AG04450 (cell line): ENCODE measurements at regions of chr21 and their contacts with region 1.

Region 1: DNA sequence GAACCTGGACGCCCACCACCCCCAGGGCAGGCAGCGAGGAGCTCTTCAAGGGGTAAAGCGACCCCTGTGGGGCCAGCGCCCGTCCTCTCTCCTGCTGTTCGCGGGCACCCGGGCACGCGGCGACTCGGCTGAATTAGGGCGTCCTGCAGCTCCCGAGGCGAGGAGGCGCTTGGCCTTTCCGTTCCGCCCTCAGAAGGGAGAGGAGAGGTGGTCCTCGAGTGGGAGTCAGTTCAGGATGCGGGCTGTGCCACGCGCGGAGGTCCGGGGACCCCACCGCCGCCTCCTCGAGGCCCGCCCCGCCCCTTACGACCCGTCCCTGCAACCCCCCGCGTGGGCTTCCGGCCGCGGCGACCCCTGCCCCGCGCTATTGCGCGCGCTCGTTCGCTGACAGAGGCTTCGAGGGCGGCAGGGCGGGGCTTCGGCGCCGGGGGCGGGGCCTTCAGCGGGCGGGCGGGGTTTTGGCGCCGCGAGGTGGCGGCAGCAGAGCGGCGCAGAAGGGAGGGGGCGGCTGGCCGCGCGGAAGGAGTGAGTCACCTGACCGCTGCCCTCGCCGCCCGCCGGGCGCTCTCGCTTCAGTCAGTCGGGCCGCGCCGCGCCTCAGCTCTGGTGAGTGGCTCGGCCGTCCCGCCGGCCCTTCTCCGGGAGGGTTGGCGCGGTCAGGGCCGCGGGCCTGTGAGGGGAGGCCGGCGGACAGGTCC is at the start of gene BACH1:
- DNase-seq: peak; percentile 84
- H3K4me3 ChIP-seq: peak within 1 kb of the TSS; percentile 97
- H3K27ac ChIP-seq: peak within 1 kb of the TSS; percentile 99
- H3K27me3 ChIP-seq: no peaks in the 10 kb centered on the region
- CTCF ChIP-seq: peak; percentile 24
- polyA plus RNA-seq, gene BACH1: 60.6 and 72.2 TPM in 2 replicates

Region 2: GRCh38 chr21:29091032-29091431 is 207.5 kb before region 1 on chr21:
- CTCF ChIA-PET with region 1: interaction called, 10 read pairs
- POLR2A ChIA-PET with region 1: interaction called, 4 read pairs
- DNase-seq: peak; percentile 37
- H3K4me3 ChIP-seq: no peak overlapping the region
- H3K27ac ChIP-seq: peak overlapping the region; percentile 55
- H3K27me3 ChIP-seq: no peaks in the 10 kb centered on the region
- CTCF ChIP-seq: no peak

Region 3: GRCh38 chr21:29145354-29145782 is 153.1 kb before region 1 on chr21:
- CTCF ChIA-PET with region 1: no interaction called
- POLR2A ChIA-PET with region 1: interaction called, 10 read pairs
- DNase-seq: peak; percentile 73
- H3K4me3 ChIP-seq: no peak overlapping the region
- H3K27ac ChIP-seq: peak overlapping the region; percentile 68
- H3K27me3 ChIP-seq: no peaks in the 10 kb centered on the region
- CTCF ChIP-seq: no peak

Region 4: GRCh38 chr21:29181799-29182470 is 116.6 kb before region 1 on chr21:
- CTCF ChIA-PET with region 1: no interaction called
- POLR2A ChIA-PET with region 1: interaction called, 13 read pairs
- DNase-seq: peak; percentile 73
- H3K4me3 ChIP-seq: peak overlapping the region; percentile 60
- H3K27ac ChIP-seq: peak overlapping the region; percentile 99
- H3K27me3 ChIP-seq: no peaks in the 10 kb centered on the region
- CTCF ChIP-seq: no peak

Region 5: GRCh38 chr21:29230541-29231275 is 67.8 kb before region 1 on chr21:
- CTCF ChIA-PET with region 1: no interaction called
- POLR2A ChIA-PET with region 1: no interaction called
- DNase-seq: no peak
- H3K4me3 ChIP-seq: no peak overlapping the region
- H3K27ac ChIP-seq: no peak overlapping the region
- H3K27me3 ChIP-seq: no peaks in the 10 kb centered on the region
- CTCF ChIP-seq: no peak

Region 6: GRCh38 chr21:29258626-29259335 is 39.7 kb before region 1 on chr21:
- CTCF ChIA-PET with region 1: no interaction called
- POLR2A ChIA-PET with region 1: interaction called, 12 read pairs
- DNase-seq: peak; percentile 47
- H3K4me3 ChIP-seq: no peak overlapping the region
- H3K27ac ChIP-seq: peak overlapping the region; percentile 49
- H3K27me3 ChIP-seq: no peaks in the 10 kb centered on the region
- CTCF ChIP-seq: no peak

Region 7: DNA sequence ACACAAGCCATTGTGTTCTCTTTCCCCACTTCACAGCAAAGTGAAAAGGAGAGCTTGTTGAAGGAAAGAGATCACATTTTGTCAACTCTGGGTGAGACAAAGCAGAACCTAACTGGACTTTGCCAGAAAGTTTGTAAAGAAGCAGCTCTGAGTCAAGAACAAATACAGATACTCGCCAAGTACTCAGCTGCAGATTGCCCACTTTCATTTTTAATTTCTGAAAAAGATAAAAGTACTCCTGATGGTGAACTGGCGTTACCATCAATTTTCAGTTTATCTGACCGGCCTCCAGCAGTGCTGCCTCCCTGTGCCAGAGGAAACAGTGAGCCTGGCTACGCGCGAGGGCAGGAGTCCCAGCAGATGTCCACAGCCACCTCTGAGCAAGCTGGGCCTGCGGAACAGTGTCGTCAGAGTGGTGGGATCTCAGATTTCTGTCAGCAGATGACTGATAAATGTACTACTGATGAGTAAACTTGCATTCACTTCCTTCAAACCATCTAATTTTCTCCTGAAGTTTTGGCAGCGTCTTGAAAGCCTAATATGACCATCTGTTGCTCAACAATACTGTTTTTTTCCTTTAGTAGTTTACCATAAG is 44.0 kb after region 1 on chr21:
- CTCF ChIA-PET with region 1: interaction called, 4 read pairs
- POLR2A ChIA-PET with region 1: interaction called, 12 read pairs
- DNase-seq: peak; percentile 97
- H3K4me3 ChIP-seq: peak overlapping the region; percentile 27
- H3K27ac ChIP-seq: peak overlapping the region; percentile 93
- H3K27me3 ChIP-seq: no peaks in the 10 kb centered on the region
- CTCF ChIP-seq: peak; percentile 21; the same call in 1 of the 2 replicates